Activated CD4-positive, alpha-beta memory T cell treated with anti-CD3 and anti-CD28 coated beads, Interleukin-2, amount 10 ng/mL, durations not matched to agents 7 days and 5 days (primary cell): ENCODE measurements at regions of chr3 and their contacts with region 1.

Region 1: DNA sequence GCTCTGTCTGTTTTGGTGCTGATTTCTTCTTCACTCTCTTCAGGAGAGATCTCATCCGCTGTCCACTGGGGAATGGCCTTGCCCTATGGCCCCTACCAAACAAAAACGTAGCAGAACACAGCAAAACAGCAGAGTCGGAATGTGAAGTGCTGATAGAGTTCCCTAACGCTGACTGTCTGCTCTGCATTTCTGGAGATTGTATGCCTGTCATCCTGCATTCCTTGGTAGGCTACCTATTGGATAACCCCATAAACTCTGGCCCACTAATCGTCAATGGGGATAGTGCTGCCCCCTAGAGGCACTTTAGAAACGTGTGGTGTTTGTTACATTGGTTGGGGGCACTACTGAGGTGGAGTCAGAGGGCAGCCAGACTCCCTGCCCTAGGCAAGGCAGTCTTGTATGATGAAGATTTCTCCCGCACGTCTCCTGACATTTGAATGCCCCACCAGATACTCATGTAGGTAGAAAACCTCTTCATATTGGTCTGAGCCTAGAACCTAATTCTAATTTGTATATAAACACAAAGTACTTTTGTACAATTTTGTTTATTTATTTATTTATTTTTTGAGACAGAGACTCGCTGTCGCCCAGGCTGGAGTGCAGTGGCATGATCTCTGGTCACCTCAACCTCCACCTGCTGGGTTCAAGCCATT is 15.6 kb upstream of the MAGEF1 start:
- DNase-seq: peak; percentile 49
- H3K4me3 Mint-ChIP-seq: no peak overlapping the region
- H3K27ac Mint-ChIP-seq: no peak overlapping the region
- H3K4me1 Mint-ChIP-seq: no peaks in the 10 kb centered on the region
- H3K27me3 Mint-ChIP-seq: peaks cover 5% of the 10 kb centered on the region

Region 2: DNA sequence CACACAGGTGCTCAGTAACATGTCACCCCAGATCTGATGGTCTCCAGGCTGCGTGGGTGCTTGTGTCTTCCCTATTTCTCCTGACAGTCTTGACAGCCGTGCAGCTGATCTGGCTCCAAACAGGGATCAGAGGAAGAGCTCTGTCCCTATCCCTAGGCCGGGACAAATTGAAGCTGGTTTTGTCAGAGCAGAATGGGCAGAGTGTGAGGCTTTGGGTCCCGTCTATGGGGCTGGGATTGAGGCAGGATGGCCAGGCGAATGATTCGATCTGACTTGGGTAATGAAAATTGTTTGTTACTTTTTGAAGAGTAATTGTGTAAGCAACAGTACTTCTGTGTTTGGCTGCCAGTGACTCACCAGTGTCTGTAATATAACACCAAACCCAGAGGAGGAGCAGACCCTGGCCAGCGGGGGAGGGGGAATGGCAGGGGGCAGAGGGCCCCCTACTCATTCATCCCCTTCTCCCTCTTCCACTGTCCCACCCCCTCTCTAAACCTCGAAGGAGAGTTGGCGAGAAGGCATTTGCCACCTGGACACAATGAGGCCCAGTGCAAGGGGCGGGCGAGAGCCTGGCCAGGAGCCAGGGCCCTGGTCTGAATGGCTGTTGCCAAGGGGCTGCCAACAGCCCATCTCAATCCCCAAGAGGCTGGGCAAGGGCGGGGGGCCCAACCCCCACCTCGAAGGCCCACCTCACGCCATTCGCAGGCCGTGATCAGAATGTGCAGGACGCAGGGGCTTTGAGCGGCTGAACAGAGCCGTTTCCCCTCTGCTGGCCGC is 10.7 kb before region 1 on chr3:
- CTCF ChIA-PET with region 1: interaction called, 10 read pairs
- POLR2A ChIA-PET with region 1: interaction called, 3 read pairs
- DNase-seq: peak; percentile 13
- H3K4me3 Mint-ChIP-seq: no peak overlapping the region
- H3K27ac Mint-ChIP-seq: no peak overlapping the region
- H3K4me1 Mint-ChIP-seq: peaks cover 9% of the 10 kb centered on the region
- H3K27me3 Mint-ChIP-seq: peaks cover 18% of the 10 kb centered on the region